OCI-LY7 (cell line): ENCODE measurements at regions of chr15 and their contacts with region 1.

Region 1: GRCh38 chr15:63277038-63277892 is at the start of gene APH1B:
- DNase-seq: peak; percentile 85
- H3K4me3 ChIP-seq: peak within 1 kb of the TSS; percentile 81
- H3K27ac ChIP-seq: peak within 1 kb of the TSS; percentile 4
- H3K4me1 ChIP-seq: peaks cover 12% of the 10 kb centered on the region
- CTCF ChIP-seq: no peak
- total RNA-seq, gene APH1B: 6.1 and 8.3 TPM in 2 replicates

Region 2: GRCh38 chr15:63048115-63048775 is 229.0 kb before region 1 on chr15:
- CTCF ChIA-PET with region 1: no interaction called
- POLR2A ChIA-PET with region 1: no interaction called
- intact Hi-C with region 1: loop called (anchors 5 kb)
- DNase-seq: peak; percentile 88
- H3K4me3 ChIP-seq: peak overlapping the region; percentile 89
- H3K27ac ChIP-seq: no peak overlapping the region
- H3K4me1 ChIP-seq: peaks cover 20% of the 10 kb centered on the region
- CTCF ChIP-seq: peak; percentile 94

Region 3: GRCh38 chr15:63122002-63122893 is 155.0 kb before region 1 on chr15:
- CTCF ChIA-PET with region 1: no interaction called
- POLR2A ChIA-PET with region 1: no interaction called
- intact Hi-C with region 1: loop called (anchors 5 kb)
- DNase-seq: peak; percentile 64
- H3K4me3 ChIP-seq: peak overlapping the region; percentile 94
- H3K27ac ChIP-seq: peak overlapping the region; percentile 20
- H3K4me1 ChIP-seq: no peaks in the 10 kb centered on the region
- CTCF ChIP-seq: peak; percentile 21; the same call in 1 of the 2 replicates

Region 4: DNA sequence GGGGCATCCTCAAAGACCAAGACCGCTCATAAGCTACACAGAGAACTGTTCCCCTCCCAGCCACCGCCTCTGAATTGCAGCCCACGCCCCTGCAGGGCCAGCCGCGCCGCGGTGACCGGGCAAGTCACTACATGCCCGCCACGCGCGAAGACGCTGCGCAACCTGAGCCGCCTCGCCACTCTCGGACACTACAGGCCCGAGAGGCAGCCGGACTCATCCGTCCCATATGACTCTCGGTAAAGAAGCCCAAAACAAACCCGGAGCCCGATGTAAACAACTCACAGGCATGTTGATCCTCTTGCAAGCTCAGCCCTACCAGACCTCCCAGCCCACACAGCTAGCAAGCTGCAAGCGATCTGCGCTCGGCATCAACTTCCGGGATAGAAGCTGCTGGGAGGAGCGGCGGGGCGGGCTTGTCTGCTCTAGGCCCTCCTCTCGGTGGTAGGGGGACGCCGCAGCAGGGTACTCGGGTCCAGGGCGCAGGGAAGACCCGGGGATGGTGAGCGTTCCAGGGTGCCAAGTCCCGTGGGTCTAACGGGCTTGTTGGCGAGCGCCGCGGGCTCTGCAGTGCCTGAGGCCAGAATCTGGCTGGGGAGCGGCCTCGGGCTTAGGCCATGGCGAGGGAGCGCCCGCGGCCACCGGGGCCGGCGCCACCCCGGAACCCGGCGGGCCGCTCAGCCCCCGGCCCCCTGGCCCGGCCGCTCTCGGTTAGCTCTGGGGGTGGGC is 120.0 kb before region 1 on chr15 and contains the start of gene RPS27L:
- CTCF ChIA-PET with region 1: no interaction called
- POLR2A ChIA-PET with region 1: interaction called, 7 read pairs
- intact Hi-C with region 1: loop called (anchors 5 kb)
- DNase-seq: peak; percentile 93
- H3K4me3 ChIP-seq: peak within 1 kb of the TSS; percentile 86
- H3K27ac ChIP-seq: peak within 1 kb of the TSS; percentile 67
- H3K4me1 ChIP-seq: peaks cover 17% of the 10 kb centered on the region
- CTCF ChIP-seq: no peak
- total RNA-seq, gene RPS27L: 41.3 and 55.5 TPM in 2 replicates

Region 5: DNA sequence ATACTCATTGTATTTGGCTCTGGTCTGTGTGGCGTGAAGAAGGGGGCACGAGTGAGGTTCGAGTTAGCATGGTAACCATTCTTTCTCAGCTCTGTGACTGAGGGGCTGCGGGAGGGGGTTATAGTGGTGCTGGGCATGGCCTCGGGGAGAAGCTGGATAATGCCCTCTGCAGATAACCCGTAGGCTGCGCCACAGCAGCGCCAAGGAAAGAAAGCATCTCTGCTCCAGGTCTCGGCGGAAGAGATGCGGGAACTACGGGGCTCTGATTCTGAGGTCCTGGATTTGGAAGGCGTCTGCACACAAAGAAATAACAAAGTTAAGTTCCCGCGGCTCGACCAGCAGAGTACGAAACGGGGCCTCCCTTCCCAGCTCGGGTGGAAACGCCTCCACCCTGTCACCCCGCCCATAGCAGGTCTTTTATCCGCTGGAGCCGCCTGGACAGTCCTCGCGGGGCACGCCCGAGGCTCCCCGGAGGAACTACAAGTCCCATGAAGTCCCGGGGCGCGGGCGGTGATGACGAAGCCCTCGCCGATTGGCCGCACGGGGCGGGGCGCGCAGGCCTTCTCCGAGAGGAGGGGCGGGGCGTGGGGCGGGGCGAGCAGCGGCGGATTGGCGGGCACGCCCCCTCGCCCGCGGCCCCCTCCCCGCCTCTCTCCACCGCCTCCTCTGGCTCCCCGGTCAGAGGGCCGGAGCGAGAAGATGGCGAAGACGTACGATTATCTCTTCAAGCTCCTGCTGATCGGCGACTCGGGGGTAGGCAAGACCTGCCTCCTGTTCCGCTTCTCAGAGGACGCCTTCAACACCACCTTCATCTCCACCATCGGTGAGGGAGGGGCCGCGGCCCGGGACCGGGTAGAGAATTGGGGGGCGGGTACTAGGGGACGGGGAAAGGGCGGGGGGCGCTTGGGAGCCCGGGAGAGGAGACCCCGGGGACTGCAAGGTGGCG is 88.1 kb before region 1 on chr15 and contains the start of gene RAB8B:
- CTCF ChIA-PET with region 1: interaction called, 5 read pairs
- POLR2A ChIA-PET with region 1: interaction called, 8 read pairs
- intact Hi-C with region 1: loop called (anchors 2 kb)
- DNase-seq: peak; percentile 96
- H3K4me3 ChIP-seq: peak within 1 kb of the TSS; percentile 79
- H3K27ac ChIP-seq: peak within 1 kb of the TSS; percentile 93
- H3K4me1 ChIP-seq: peaks cover 46% of the 10 kb centered on the region
- CTCF ChIP-seq: no peak
- total RNA-seq, gene RAB8B: 4.9 and 9.5 TPM in 2 replicates

Region 6: GRCh38 chr15:63288778-63289378 is 11.6 kb after region 1 on chr15:
- CTCF ChIA-PET with region 1: no interaction called
- POLR2A ChIA-PET with region 1: interaction called, 11 read pairs
- intact Hi-C with region 1: no loop called
- DNase-seq: peak; percentile 59
- H3K4me3 ChIP-seq: no peak overlapping the region
- H3K27ac ChIP-seq: no peak overlapping the region
- H3K4me1 ChIP-seq: no peaks in the 10 kb centered on the region
- CTCF ChIP-seq: peak; percentile 94